ENCODE measurements at regions of chr22 and their contacts with region 1.

Region 1: DNA sequence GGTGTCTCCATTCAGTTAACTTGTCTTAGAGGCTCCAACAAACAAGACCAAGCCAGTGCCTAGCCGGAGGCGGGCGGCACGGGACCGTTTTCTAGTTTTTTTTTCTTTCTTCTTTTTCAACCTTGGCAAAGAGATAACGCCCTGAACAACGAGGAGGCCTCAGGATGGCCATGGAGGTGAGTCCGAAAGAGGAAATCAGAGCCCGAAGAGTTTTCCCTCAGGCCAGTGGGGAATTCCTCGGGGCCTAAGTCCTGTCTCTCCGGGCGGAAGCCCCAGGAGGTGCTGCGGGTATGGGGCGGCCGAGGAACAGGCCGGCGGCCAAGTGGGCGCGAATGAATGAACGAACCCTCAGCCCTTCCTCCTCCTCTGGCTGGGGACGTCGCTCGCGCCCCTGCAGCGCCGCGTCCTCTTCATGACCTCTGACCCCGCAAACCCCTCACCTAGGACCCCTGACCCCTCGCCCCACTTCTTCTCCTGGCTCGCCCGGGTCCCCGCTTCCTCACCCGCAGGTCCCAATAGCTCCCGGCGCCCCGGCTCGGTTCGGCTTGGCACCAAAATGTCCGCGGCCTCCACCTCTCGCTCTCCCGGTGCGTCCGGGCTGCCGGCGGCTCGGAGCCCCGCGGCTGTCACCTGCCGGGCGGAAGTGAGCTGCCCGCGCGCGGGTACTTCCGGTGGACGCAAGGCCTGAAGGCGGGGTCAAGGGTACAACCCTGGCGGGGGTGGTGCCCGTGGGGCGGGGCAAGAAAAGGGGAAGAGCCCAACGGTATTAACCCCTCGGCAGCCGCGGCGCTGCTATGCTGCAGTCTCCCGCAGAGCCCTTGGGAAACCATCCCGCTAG is at the start of gene AP1B1:
- DNase-seq: peak; percentile 93
- ATAC-seq: peak; percentile 77
- H3K4me3 ChIP-seq: peak within 1 kb of the TSS; percentile 76 to 96 (median 84)
- H3K4me3 Mint-ChIP-seq: peak within 1 kb of the TSS; percentile 97
- H3K27ac ChIP-seq: peak within 1 kb of the TSS; percentile 85 to 93
- H3K27ac Mint-ChIP-seq: peak within 1 kb of the TSS; percentile 98
- H3K4me1 ChIP-seq: peaks cover 51 to 57% of the 10 kb centered on the region in 2 donors
- H3K4me1 Mint-ChIP-seq: peaks cover 50% of the 10 kb centered on the region
- H3K27me3 ChIP-seq: no peaks in the 10 kb centered on the region
- H3K27me3 Mint-ChIP-seq: no peaks in the 10 kb centered on the region
- CTCF ChIP-seq: no peak
- total RNA-seq, gene AP1B1: 162 and 174 TPM in 2 replicates

Region 2: GRCh38 chr22:29072193-29072978 is 315.8 kb before region 1 on chr22:
- CTCF ChIA-PET with region 1: no interaction called
- POLR2A ChIA-PET with region 1: no interaction called
- intact Hi-C with region 1: loop called (anchors 10 kb)
- DNase-seq: peak; percentile 85
- ATAC-seq: peak; percentile 99
- H3K4me3 ChIP-seq: peak overlapping the region in 4 of 5 experiments; percentile 15 to 59 (median 45)
- H3K4me3 Mint-ChIP-seq: peak overlapping the region; percentile 84
- H3K27ac ChIP-seq: no peak overlapping the region
- H3K27ac Mint-ChIP-seq: no peak overlapping the region
- H3K4me1 ChIP-seq: peaks cover 27 to 28% of the 10 kb centered on the region in 2 donors
- H3K4me1 Mint-ChIP-seq: peaks cover 22% of the 10 kb centered on the region
- H3K27me3 ChIP-seq: peaks cover 0 to 63% (median 36%) of the 10 kb centered on the region in 4 experiments
- H3K27me3 Mint-ChIP-seq: peaks cover 62% of the 10 kb centered on the region
- CTCF ChIP-seq: no peak

Region 3: GRCh38 chr22:29359469-29359868 is 28.7 kb before region 1 on chr22:
- CTCF ChIA-PET with region 1: interaction called, 17 read pairs
- POLR2A ChIA-PET with region 1: interaction called, 13 read pairs
- intact Hi-C with region 1: loop called (anchors 1 kb)
- DNase-seq: no peak
- ATAC-seq: no peak
- H3K4me3 ChIP-seq: no peak overlapping the region
- H3K4me3 Mint-ChIP-seq: no peak overlapping the region
- H3K27ac ChIP-seq: no peak overlapping the region
- H3K27ac Mint-ChIP-seq: peak overlapping the region; percentile 54
- H3K4me1 ChIP-seq: peaks cover 10 to 15% of the 10 kb centered on the region in 2 donors
- H3K4me1 Mint-ChIP-seq: peaks cover 19% of the 10 kb centered on the region
- H3K27me3 ChIP-seq: no peaks in the 10 kb centered on the region
- H3K27me3 Mint-ChIP-seq: no peaks in the 10 kb centered on the region
- CTCF ChIP-seq: no peak

Region 4: GRCh38 chr22:29375398-29376076 is 12.6 kb before region 1 on chr22:
- CTCF ChIA-PET with region 1: interaction called, 12 read pairs
- POLR2A ChIA-PET with region 1: interaction called, 9 read pairs
- intact Hi-C with region 1: no loop called
- DNase-seq: no peak
- ATAC-seq: no peak
- H3K4me3 ChIP-seq: no peak overlapping the region
- H3K4me3 Mint-ChIP-seq: no peak overlapping the region
- H3K27ac ChIP-seq: peak overlapping the region in 1 of 2 donors; percentile 45
- H3K27ac Mint-ChIP-seq: peak overlapping the region; percentile 76
- H3K4me1 ChIP-seq: peaks cover 32 to 33% of the 10 kb centered on the region in 2 donors
- H3K4me1 Mint-ChIP-seq: peaks cover 72% of the 10 kb centered on the region
- H3K27me3 ChIP-seq: no peaks in the 10 kb centered on the region
- H3K27me3 Mint-ChIP-seq: no peaks in the 10 kb centered on the region
- CTCF ChIP-seq: no peak

Region 5: DNA sequence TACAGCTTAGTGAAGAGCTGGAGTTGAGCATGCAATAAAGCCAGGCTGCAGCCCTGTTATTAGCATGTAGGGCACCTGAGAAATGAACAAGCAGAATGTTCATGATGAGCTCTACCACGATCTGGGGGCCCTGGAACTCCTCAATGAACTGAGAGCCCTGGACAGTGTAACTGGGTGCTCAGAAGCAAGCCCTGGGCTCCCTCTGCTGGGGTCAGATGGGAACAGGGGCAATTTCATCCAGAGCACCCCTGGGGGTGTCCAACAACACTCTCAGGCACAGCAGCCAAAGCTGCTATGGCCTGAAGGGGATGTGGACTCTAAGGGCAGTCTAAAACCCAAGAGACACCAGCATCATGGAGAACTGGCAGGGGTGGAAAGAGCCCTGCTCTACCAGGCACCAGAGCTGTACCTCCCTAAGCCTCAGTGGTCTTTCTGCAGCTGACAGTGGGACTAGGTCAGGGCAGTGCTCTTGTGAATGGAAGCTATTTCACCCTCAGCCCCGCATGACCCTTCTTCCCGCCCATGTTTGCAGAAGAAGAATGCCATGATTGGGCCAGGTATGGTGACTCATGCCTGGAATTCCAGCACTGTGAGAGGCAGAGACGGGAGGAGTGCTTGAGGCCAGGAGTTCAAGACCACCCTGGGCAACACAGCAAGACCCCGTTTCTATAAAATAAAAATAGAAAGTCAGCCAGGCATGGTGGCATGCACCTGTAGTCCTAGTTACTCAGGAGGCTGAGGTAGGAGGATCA is 136.5 kb after region 1 on chr22:
- CTCF ChIA-PET with region 1: interaction called, 106 read pairs
- POLR2A ChIA-PET with region 1: no interaction called
- intact Hi-C with region 1: no loop called
- DNase-seq: peak; percentile 61
- ATAC-seq: peak; percentile 91
- H3K4me3 ChIP-seq: no peak overlapping the region
- H3K4me3 Mint-ChIP-seq: no peak overlapping the region
- H3K27ac ChIP-seq: no peak overlapping the region
- H3K27ac Mint-ChIP-seq: no peak overlapping the region
- H3K4me1 ChIP-seq: no peaks in the 10 kb centered on the region
- H3K4me1 Mint-ChIP-seq: no peaks in the 10 kb centered on the region
- H3K27me3 ChIP-seq: no peaks in the 10 kb centered on the region
- H3K27me3 Mint-ChIP-seq: no peaks in the 10 kb centered on the region
- CTCF ChIP-seq: peak; percentile 63

Region 6: DNA sequence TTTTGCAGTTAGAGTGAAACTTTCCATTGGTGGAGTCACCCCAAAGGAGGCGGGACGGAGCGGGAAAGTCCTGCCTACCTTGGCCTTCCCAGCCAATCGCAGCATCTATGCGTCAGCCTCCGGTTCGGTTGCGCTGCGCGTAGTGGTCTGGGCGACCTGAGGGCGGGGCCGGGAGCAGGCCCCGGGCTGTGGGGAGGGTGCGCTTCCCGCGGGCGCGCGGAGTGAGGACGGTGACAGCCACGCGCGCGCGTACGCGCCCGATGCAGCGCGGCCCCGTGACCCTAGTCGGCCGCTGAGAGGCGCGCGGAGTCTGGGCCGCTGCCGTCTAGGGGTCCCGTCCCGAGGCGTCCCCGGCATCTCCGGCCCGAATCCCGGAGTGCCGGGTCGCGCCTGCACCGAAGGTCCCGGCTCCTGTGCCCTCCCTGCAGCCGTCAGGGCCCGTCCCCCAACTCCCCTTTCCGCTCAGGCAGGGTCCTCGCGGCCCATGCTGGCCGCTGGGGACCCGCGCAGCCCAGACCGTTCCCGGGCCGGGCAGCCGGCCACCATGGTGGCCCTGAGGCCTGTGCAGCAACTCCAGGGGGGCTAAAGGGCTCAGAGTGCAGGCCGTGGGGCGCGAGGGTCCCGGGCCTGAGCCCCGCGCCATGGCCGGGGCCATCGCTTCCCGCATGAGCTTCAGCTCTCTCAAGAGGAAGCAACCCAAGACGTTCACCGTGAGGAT is 215.4 kb after region 1 on chr22 and contains the start of gene NF2:
- CTCF ChIA-PET with region 1: interaction called, 3 read pairs
- POLR2A ChIA-PET with region 1: interaction called, 9 read pairs
- intact Hi-C with region 1: loop called (anchors 1 kb)
- DNase-seq: peak; percentile 99
- ATAC-seq: peak; percentile 97
- H3K4me3 ChIP-seq: peak within 1 kb of the TSS; percentile 82 to 99 (median 95)
- H3K4me3 Mint-ChIP-seq: peak within 1 kb of the TSS; percentile 98
- H3K27ac ChIP-seq: peak within 1 kb of the TSS; percentile 81 to 92
- H3K27ac Mint-ChIP-seq: peak within 1 kb of the TSS; percentile 97
- H3K4me1 ChIP-seq: peaks cover 9 to 15% of the 10 kb centered on the region in 2 donors
- H3K4me1 Mint-ChIP-seq: peaks cover 20% of the 10 kb centered on the region
- H3K27me3 ChIP-seq: no peaks in the 10 kb centered on the region
- H3K27me3 Mint-ChIP-seq: no peaks in the 10 kb centered on the region
- CTCF ChIP-seq: no peak
- total RNA-seq, gene NF2: 26.6 and 27.7 TPM in 2 replicates